ENCODE measurements at regions of chr18 and their contacts with region 1.

Region 1: GRCh38 chr18:58847383-58848071 is 17.1 kb upstream of the ZNF532 start:
- DNase-seq: peak in 7 of 10 donors; percentile 20 to 69 (median 51)
- H3K4me3 ChIP-seq: peak overlapping the region; percentile 4 to 70 (median 49)
- H3K27ac ChIP-seq: peak overlapping the region in 51 of 59 donors; percentile 0 to 84 (median 56)
- H3K27me3 ChIP-seq: no peaks in the 10 kb centered on the region
- CTCF ChIP-seq: no peak

Region 2: GRCh38 chr18:58788971-58789875 is 58.3 kb before region 1 on chr18:
- intact Hi-C with region 1: loop called in 1 of 2 experiments (anchors 10 kb)
- DNase-seq: peak in 6 of 10 donors; percentile 39 to 68 (median 52)
- H3K4me3 ChIP-seq: peak overlapping the region in 1 of 59 donors; percentile 3
- H3K27ac ChIP-seq: peak overlapping the region; percentile 33 to 95 (median 81)
- H3K27me3 ChIP-seq: no peaks in the 10 kb centered on the region
- CTCF ChIP-seq: peak in 2 of 56 donors; percentile 11 to 23

Region 3: DNA sequence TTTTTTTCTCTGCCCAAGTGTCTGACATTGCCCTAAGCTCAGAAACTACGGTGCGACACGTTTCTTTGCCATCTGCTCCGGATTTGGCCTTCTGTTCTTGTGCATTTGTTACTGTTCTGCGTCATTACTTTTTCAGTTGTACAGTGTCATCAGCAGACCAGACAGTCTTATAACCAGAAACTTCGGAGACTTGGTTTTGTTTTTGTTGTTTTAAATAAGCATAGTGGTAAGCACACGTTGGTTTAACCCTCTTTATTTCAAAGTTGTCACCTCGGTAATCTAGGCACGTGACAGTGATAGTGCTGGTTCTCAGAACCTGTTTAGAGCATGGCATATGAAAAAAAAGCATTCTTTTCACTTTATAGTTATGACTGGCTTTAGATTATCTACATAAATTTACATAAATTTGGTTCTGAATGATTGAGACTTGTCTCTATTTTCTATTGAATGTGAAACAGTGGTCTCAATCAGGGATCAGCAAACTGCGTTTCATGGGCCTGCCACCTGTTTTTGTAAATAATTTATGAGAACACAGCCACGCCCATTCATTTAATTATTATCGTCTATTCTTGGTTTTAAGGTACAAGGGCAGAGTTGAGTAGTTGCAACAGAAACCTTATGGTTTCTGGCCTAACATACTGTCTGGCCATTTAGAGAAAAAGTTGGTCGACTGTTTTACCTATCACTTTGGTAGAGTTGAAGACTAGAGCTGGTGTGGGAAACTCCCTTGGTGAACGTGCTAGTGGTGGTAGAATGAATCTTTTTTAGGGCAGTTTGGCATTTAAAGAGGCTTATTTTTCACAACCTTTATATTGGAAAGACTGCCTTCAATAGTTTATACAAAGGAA is 123.6 kb after region 1 on chr18:
- intact Hi-C with region 1: no loop called
- DNase-seq: peak in 1 of 10 donors; percentile 36
- H3K4me3 ChIP-seq: no peak overlapping the region
- H3K27ac ChIP-seq: peak overlapping the region in 52 of 59 donors; percentile 11 to 91 (median 60)
- H3K27me3 ChIP-seq: no peaks in the 10 kb centered on the region
- CTCF ChIP-seq: no peak